ENCODE measurements at regions of chr19 and their contacts with region 1.

Region 1: DNA sequence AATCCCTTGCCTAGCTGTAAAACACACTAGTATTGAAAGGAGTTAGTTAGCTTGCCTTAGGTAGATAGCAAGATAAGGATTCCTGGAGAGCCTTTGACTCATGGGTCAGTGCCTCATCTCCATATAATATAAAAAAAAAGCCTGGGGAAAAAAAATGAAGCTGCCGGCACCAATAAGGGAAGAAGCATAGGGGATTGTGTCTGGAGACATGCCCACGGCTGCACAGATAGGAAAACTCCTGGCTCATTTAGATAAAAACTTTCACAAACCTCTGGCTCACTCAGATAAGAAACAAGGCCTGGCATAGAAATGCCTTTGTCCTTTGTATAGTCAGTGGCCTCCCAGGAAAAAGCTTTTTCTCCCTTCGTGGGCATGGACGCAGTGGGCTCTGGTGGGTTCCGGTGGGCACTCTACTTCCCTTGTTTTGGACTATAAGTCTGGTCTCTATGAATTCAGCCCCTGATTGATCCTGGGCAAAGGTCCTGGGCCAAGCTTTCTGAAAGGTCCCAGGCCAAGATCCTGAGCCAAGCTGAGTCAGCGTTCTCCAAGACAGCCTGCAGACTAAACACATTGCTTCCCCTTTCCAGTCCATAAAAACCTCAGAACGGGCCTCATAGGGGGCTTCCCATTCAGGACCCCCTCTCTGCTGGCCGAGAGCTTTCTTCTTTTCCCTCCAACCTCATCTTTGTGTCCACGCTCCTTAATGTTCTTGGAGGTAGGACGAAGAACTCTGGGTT is 4.9 kb upstream of the OR7A17 start:
- DNase-seq: peak in 2 of 5 donors; percentile 19 to 30
- ATAC-seq: no peak
- H3K4me3 ChIP-seq: no peak overlapping the region
- H3K27ac ChIP-seq: no peak overlapping the region
- H3K4me1 ChIP-seq: peaks cover 0 to 16% (median 6%) of the 10 kb centered on the region in 12 donors
- H3K27me3 ChIP-seq: peaks cover 0 to 20% (median 5%) of the 10 kb centered on the region in 9 donors
- CTCF ChIP-seq: no peak
- POLR2A ChIP-seq: no peak

Region 2: GRCh38 chr19:14571695-14572490 is 318.9 kb before region 1 on chr19 and contains the start of gene NDUFB7:
- intact Hi-C with region 1: loop called in 8 of 10 experiments (anchors 2 to 5 kb)
- DNase-seq: peak; percentile 91 to 95 (median 94)
- ATAC-seq: peak; percentile 95 to 98 (median 98)
- H3K4me3 ChIP-seq: peak within 1 kb of the TSS; percentile 66 to 99 (median 93)
- H3K27ac ChIP-seq: peak within 1 kb of the TSS; percentile 76 to 95 (median 87)
- H3K4me1 ChIP-seq: peaks cover 4 to 50% (median 27%) of the 10 kb centered on the region in 12 donors
- H3K27me3 ChIP-seq: no peaks in the 10 kb centered on the region
- CTCF ChIP-seq: peak; percentile 54 to 95 (median 78)
- POLR2A ChIP-seq: peak in 1 of 2 donors; percentile 58
- total RNA-seq, gene NDUFB7: 290 to 1,084 (median 402) TPM

Region 3: DNA sequence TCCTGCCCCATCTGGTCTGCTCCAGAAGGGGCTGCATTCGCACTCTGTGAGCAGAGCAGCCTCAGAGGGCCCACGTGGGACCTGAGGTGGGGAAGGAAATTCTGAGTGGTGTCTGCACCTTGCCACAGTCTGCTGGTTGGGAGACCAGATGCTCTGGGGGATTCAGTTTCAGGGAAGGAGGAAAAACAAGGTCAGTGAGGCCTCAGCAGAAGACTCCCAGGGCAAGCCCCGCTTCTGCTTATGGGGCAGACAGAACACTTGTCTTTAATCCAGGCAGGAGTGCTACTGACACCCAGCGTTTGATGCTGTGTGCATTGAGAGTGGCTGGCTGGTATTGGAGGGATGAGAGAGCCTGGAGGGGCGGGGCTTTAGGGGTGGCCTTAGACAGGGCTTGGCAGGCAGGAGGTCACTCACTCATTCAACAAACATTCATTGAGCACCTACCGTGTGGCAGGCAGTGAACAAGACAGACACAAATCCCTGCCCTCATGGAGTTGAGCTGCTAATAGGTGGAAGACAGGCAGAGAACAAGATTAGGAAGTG is 312.9 kb before region 1 on chr19:
- intact Hi-C with region 1: loop called in 8 of 10 experiments (anchors 2 to 5 kb)
- DNase-seq: no peak
- ATAC-seq: no peak
- H3K4me3 ChIP-seq: no peak overlapping the region
- H3K27ac ChIP-seq: no peak overlapping the region
- H3K4me1 ChIP-seq: peaks cover 0 to 8% (median 4%) of the 10 kb centered on the region in 12 donors
- H3K27me3 ChIP-seq: no peaks in the 10 kb centered on the region
- CTCF ChIP-seq: no peak
- POLR2A ChIP-seq: no peak

Region 4: DNA sequence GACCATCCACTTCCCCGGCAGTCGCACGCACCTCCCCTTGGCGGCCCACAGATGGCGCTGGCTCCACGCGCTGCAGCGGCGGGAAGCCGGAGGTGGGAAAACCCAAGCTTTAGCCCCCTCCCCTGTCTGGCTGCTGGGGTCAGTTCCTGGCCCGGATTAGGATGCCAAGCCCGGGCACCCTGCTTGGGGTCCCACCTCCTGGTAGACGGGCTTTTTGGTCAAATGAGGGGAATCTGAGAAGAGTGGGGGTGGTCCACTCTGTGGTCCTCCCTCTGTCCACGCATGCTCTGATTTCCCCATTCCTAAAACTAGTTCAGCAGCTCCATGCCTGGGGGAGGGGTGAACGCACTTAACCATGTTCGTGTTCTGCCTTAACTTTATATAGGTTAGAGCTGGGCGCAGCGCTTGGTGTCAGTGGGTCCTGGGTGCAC is 104.4 kb before region 1 on chr19:
- intact Hi-C with region 1: loop called in 4 of 10 experiments (anchors 1 to 10 kb)
- DNase-seq: peak in 4 of 5 donors; percentile 28 to 71 (median 35)
- ATAC-seq: peak in 1 of 4 donors; percentile 15
- H3K4me3 ChIP-seq: no peak overlapping the region
- H3K27ac ChIP-seq: no peak overlapping the region
- H3K4me1 ChIP-seq: peaks cover 0 to 41% (median 0%) of the 10 kb centered on the region in 12 donors
- H3K27me3 ChIP-seq: peaks cover 0 to 16% (median 5%) of the 10 kb centered on the region in 9 donors
- CTCF ChIP-seq: peak; percentile 24 to 72 (median 46)
- POLR2A ChIP-seq: no peak

Region 5: GRCh38 chr19:14992780-14993179 is 102.0 kb after region 1 on chr19:
- intact Hi-C with region 1: no loop called
- DNase-seq: no peak
- ATAC-seq: no peak
- H3K4me3 ChIP-seq: no peak overlapping the region
- H3K27ac ChIP-seq: no peak overlapping the region
- H3K4me1 ChIP-seq: no peaks in the 10 kb centered on the region
- H3K27me3 ChIP-seq: peaks cover 0 to 10% (median 0%) of the 10 kb centered on the region in 9 donors
- CTCF ChIP-seq: no peak
- POLR2A ChIP-seq: no peak